ENCODE measurements at regions of chrX and their contacts with region 1.

Region 1: GRCh38 chrX:40647307-40648197 is at the start of gene CXorf38:
- DNase-seq: peak; percentile 96
- total RNA-seq, gene CXorf38: 6.2 TPM

Region 2: DNA sequence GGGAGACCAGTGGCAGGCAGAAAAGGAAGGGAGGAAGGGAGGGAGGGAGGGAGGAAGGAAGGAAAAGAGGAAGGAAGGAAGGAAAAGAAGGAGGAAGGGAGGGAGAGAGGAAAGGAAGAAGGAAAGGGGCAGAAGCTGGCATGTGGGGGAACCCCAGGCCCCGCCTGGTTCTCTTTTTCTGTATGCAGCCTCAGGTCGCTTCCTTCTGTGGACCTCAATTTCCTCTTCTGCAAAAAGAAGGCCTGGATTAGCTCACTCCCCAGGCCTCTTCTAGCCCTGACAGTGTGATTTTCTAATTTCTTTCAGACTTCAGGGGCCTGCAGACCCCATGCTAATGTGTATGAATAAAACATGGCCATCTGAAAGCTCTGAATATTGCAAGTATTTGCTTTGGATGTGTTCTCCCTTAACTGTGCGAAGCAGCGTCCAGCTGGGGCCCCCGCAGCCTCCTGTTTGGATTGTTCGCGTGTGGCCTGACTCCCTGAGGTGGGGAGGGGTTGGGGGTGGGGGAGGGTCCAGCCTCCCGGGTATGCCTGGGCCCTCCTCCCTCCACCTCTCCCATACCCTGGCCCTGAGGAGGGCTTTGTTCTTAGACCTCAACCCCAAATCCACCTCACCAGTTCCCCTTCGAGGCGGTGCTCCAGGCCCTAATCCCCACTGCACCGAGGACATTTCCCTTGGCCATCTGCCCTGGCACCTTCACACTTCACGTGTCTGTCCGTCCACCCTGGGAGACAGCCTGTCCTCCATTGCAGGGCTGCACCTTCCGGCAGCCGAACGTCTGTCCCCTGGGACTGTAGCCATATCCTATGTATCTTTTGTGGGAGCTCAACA is 266.7 kb before region 1 on chrX:
- intact Hi-C with region 1: no loop called
- DNase-seq: no peak

Region 3: DNA sequence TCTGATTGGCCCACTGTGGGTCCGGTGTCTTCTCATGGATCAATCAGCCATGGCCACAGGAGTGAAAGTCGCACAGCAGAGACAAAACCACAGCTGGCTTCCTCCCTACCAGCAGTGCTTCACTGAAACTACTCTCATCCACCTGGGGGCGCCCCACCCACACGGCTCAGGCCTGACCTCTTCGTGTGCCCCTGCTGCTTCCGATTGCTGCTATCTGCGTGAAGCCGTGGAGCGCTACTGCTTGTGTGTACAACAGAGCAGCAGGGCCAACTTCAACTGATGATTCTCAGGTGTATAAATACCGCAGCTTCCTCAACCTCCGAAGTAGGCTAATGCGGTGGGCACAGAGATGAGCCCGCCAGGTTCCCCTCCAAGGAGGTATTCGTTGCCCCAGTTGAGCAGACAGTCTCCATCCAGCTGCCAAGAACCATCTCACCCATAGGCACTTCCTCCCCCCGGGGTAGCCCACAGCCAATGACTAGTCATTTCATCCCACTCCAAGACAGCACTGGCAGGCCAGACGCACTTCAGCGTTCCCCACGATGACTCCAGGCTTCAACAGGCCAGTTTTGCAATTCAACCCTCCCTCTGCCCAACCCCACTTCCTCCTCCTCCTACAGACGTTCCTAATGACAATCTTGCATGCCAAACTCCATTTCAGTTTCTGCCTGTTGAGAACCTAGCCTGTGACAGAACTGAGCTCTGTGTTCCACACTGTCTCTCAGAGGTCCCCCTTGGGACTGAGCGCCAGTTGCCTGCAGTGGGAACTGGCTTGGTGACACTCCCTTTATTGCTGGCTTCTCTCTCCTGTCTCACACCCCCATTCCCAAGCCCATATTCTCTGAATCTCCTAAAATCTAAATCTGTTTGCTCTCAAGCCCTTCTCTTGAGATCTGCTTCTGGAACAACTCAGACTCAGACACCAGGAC is 108.1 kb before region 1 on chrX:
- intact Hi-C with region 1: loop called (anchors 10 kb)
- DNase-seq: no peak

Region 4: DNA sequence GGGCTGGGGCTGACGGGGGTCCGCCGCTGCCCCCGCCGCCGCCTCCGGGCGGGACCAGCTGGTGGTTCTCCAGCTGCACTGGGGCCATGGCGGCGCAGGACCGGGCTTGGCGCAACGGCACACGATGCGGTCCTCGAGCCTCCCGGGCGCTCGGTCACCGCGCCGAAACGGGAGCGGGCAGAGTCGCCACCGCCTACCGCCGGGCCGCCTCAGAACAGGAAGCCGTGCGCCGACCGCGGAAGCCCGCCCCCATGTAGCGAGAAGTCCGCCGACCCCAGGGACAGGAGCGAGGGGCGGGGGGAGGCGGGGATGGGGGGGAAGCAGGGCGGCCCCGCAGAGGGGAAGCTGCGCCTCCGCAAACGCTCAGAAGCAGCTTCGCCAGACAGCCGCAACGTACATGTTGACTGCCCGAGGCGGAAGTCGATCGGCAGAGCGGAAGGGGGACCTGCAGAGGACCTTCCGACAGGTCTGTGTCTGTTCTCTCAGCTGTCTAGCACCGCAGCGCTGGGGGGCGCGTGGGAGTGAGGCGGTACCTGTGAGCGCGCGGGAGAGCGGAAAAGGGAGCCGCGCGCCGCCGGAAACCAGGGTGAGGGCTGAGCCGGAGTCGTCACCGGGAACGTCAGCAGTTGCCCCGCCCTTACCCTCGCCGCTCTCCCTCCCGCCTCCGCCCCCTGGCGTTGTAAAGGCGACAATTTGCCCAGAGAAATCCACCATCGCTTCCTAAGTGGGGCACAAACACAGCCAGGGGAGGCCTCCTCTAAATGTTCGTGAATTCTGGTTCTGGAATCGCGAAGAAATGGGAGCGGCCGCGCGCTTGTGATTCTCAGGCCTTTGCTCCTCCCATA is 88.0 kb after region 1 on chrX and contains the start of gene MED14:
- intact Hi-C with region 1: loop called (anchors 5 kb)
- DNase-seq: peak; percentile 95
- total RNA-seq, gene MED14: 38.3 TPM

Region 5: DNA sequence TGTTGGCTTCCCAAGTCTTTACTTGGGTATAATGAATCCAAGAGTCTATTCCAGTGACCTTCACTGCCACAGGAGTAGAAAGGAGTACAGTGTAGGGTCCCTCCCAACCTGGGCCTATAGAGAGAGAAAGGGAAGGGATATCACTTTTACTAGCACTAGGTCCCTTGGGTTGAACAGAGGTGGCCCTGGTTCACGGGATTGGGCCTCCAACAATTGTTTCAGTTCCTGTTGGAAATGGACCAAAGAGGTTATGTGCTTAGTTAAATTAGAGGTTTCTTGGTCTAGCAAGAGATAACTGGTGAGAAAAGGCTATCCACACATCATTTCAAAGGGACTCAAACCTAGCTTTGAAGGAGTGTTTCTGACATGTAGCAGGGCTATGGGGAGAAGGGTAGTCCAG is 144.9 kb after region 1 on chrX:
- intact Hi-C with region 1: loop called (anchors 2 kb)
- DNase-seq: no peak

Region 6: DNA sequence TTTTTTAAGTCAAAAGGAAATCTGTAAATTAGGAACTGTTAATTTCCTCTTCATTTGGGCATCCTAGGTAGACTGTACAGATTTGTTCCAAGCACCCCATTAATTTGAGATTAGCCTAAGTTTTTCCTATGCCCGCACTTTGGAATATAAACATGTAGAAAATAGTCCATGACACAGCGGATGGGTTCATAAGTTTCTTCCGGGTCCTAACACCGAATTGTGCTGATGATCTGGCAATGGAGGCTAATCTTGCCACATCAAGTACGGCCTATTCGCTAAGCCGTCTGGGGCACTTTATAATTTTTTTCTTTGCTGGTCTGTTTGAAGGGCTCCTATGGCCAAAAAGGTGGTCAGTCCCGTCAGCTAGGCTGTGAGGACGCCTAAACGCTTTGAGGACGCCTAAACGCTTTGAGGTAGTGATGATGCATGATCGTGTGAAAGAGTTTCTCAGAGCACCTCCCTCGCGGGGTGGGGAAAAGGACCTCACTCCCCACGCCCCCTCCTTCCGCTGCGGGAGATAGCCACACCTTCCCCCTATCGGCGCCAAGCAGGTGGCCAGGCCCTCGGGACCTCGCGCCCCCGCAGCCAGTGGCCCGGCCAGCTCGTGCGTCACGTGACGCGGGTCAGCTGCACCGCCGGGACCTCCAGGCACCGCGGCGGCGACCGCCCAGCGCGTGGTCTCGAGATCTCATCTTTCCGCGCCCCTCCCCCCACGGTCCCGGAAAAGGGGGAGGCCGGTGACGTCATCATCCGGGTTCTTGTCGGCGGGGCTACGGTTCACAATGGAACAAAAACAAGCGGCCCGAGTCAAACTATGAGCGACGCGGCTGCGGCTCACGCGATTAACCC is 436.7 kb after region 1 on chrX:
- intact Hi-C with region 1: loop called (anchors 2 kb)
- DNase-seq: peak; percentile 98

Region 7: DNA sequence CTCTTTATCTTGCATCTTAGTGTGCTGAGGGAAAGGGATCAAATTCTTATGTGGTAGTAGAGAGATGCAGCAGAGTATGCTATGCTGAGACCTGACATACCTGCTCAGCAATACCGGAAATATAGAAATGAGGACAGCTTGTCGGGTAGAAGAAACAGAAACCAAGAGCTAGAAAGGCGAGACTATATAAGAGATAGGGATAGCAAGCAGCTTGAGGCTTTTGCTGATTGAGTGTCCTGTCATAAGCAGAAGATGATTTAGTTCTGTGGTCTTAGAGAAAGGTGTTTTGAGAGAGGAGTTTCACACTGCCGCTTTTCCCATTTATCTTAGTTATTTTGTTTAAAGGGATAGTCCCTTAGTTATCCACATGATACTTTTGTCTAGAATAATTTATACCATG is 469.4 kb after region 1 on chrX:
- intact Hi-C with region 1: loop called (anchors 5 kb)
- DNase-seq: no peak

Region 8: GRCh38 chrX:41259516-41259915 is 612.0 kb after region 1 on chrX:
- intact Hi-C with region 1: loop called (anchors 10 kb)
- DNase-seq: no peak

Measured in cardiac septum (tissue), 1 donor.